Mammary epithelial cell (primary cell): ENCODE measurements at regions of chr3 and their contacts with region 1.

Region 1: DNA sequence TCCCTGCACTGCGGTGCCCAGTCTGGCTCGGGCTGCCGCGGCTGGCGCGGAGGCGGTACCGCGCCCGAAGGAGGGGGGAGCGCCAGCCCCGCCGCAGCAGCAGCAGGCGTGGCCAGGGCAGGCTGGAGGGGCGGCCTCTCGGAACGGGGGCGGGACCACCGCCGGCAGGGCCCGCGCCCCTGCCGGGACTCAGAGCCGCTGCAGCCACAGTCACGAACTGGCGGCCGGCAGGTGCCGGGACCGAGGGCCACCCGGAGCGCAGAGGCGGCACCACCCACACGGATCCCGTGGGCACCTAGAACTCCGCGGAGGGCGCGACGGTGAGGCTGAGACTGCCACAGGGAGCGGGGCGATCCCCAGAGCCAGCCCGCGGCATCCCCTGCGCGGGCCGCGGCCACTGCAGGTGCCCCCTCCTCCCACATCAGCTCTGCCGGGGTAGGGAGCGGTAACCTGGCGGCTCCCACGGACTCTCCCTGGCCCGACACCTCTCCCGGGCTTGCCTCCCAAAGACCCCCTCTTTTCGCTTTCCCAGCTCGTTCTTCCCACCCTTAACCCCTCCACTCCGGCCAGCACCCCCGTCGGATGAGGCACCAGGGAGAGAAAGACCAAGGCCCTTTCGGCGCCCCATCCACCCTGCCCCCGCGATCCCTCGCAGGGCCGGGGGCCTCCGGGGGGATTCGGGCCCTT is at the start of gene VWA5B2:
- DNase-seq: peak; percentile 43
- H3K4me3 ChIP-seq: peak within 1 kb of the TSS in 2 of 3 experiments; percentile 29 to 32
- H3K27ac ChIP-seq: no peak within 1 kb of the TSS
- H3K4me1 ChIP-seq: peaks cover 29% of the 10 kb centered on the region
- H3K27me3 ChIP-seq: peaks cover 30% of the 10 kb centered on the region
- CTCF ChIP-seq: no peak
- total RNA-seq, gene VWA5B2: 0.19 to 0.33 TPM

Region 2: DNA sequence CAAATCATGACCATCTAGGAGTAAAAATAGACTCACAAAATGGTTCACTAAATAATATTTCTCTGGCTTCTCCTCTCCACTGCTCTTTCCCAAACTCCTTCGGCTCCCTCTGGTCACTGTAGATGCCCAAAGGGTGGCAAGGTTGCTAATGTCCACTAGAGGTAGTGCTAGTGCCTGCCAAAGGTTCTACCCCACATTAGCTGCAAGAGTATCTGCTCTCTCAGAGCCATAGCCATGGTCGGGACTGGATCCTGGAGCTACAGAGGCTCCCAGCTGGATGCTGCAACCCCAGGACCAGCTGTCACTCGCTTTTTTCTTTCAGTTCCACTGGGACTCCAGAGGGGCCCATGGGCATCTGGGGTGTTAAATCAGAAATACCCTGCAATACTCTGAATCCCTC is 189.5 kb before region 1 on chr3:
- CTCF ChIA-PET with region 1: no interaction called
- dilution Hi-C with region 1: no loop called
- in situ Hi-C with region 1: no loop called
- intact Hi-C with region 1: loop called (anchors 10 kb)
- DNase-seq: peak; percentile 35
- H3K4me3 ChIP-seq: no peak overlapping the region
- H3K27ac ChIP-seq: no peak overlapping the region
- H3K4me1 ChIP-seq: no peaks in the 10 kb centered on the region
- H3K27me3 ChIP-seq: no peaks in the 10 kb centered on the region
- CTCF ChIP-seq: peak; percentile 49 to 56

Region 3: GRCh38 chr3:184145111-184145524 is 84.4 kb before region 1 on chr3:
- CTCF ChIA-PET with region 1: no interaction called
- dilution Hi-C with region 1: no loop called
- in situ Hi-C with region 1: no loop called
- intact Hi-C with region 1: loop called (anchors 2 kb)
- DNase-seq: peak; percentile 67
- H3K4me3 ChIP-seq: no peak overlapping the region
- H3K27ac ChIP-seq: no peak overlapping the region
- H3K4me1 ChIP-seq: no peaks in the 10 kb centered on the region
- H3K27me3 ChIP-seq: no peaks in the 10 kb centered on the region
- CTCF ChIP-seq: peak; percentile 74 to 80

Region 4: DNA sequence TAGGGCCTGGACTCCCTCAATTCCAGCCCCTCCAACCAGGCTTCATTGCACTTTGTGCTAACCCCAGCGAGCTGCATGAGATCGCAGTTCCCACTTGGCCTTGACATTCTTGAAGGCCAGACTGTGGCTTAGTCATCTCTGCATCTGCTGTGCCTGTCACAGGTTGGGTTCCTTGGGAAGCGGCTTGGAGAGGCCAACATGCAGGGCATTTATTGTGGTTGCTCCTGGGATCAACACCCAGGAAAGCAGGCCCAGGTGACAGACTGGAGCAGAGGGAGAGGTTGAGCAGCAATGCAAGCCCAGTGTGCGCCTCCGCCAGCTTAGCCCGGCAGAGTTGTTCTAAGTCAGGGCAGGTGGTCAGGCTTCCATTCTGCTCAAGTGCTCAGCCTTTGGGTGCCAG is 33.0 kb before region 1 on chr3:
- CTCF ChIA-PET with region 1: no interaction called
- dilution Hi-C with region 1: loop called (anchors 5 kb)
- in situ Hi-C with region 1: no loop called
- intact Hi-C with region 1: no loop called
- DNase-seq: no peak
- H3K4me3 ChIP-seq: no peak overlapping the region
- H3K27ac ChIP-seq: no peak overlapping the region
- H3K4me1 ChIP-seq: no peaks in the 10 kb centered on the region
- H3K27me3 ChIP-seq: no peaks in the 10 kb centered on the region
- CTCF ChIP-seq: no peak

Region 5: DNA sequence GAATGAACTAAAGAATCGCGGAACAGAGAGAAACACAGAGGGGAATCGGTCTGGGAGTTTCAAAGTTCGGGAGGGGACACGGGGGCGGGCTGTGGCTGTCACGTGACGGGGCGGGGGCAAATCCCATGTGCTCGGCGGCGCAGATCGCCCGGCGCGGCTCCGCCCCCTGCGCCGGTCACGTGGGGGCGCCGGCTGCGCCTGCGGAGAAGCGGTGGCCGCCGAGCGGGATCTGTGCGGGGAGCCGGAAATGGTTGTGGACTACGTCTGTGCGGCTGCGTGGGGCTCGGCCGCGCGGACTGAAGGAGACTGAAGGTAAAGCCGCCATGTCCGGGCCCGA is 84.8 kb after region 1 on chr3 and contains the start of gene EIF4G1:
- CTCF ChIA-PET with region 1: no interaction called
- dilution Hi-C with region 1: no loop called
- in situ Hi-C with region 1: no loop called
- intact Hi-C with region 1: no loop called
- DNase-seq: peak; percentile 92
- H3K4me3 ChIP-seq: peak within 1 kb of the TSS; percentile 45 to 81 (median 73)
- H3K27ac ChIP-seq: peak within 1 kb of the TSS; percentile 69
- H3K4me1 ChIP-seq: peaks cover 22% of the 10 kb centered on the region
- H3K27me3 ChIP-seq: no peaks in the 10 kb centered on the region
- CTCF ChIP-seq: no peak
- total RNA-seq, gene EIF4G1: 278 to 534 TPM

Region 6: DNA sequence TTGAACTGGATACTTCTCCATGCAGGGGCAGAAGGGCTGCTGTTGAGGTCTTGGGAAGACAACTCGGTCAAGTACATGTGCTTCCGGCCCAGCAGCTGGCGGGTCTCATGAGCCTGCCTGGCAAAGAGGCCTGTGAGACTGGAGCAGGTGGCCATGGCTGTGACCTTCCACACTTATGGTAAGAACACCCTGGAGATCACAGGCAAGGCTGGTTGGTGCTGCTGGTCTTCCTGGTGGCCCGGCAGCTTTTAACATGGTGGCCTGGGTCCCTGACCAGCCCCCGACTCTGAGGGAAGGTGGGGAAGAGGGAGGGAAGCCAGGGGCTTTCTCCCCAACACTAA is 165.8 kb after region 1 on chr3:
- CTCF ChIA-PET with region 1: no interaction called
- dilution Hi-C with region 1: no loop called
- in situ Hi-C with region 1: no loop called
- intact Hi-C with region 1: no loop called
- DNase-seq: no peak
- H3K4me3 ChIP-seq: no peak overlapping the region
- H3K27ac ChIP-seq: no peak overlapping the region
- H3K4me1 ChIP-seq: no peaks in the 10 kb centered on the region
- H3K27me3 ChIP-seq: peaks cover 6% of the 10 kb centered on the region
- CTCF ChIP-seq: no peak